Right ventricle myocardium superior (tissue), 1 donor: ENCODE measurements at regions of chr10 and their contacts with region 1.

Region 1: GRCh38 chr10:76984559-76985443 is 652.8 kb downstream of the KCNMA1 start:
- DNase-seq: peak; percentile 71
- ATAC-seq: peak; percentile 93

Region 2: GRCh38 chr10:76558586-76558985 is 426.2 kb before region 1 on chr10:
- intact Hi-C with region 1: loop called (anchors 10 kb)
- DNase-seq: no peak
- ATAC-seq: peak; percentile 52

Region 3: DNA sequence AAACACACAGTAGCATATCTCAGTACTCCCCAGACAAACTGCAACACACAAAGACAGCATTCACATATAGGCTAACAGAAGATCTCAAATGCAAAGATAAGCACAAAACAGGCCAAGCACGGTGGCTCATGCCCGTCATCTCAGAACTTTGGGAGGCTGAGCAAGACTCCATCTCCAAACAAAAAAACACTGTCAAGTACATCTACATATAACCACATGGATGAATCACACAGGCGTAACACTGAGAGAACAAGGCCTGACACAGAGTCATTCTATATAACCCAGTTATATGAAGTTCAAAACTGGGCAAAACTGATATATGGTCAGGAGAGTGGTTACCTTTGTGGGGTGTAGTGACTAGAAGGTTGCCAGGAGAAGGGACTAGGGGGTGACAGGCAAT is 146.4 kb after region 1 on chr10:
- intact Hi-C with region 1: no loop called
- DNase-seq: no peak
- ATAC-seq: no peak